Activated CD4-positive, alpha-beta T cell treated with anti-CD3 and anti-CD28 coated beads for 36 hours (primary cell): ENCODE measurements at regions of chrX and their contacts with region 1.

Region 1: GRCh38 chrX:1453951-1454785 is 1.5 kb upstream of the ASMTL start:
- DNase-seq: peak; percentile 96
- ATAC-seq: peak; percentile 57
- H3K4me3 Mint-ChIP-seq: peak overlapping the region; percentile 53
- H3K27ac Mint-ChIP-seq: peak overlapping the region; percentile 47
- H3K4me1 Mint-ChIP-seq: peaks cover 8% of the 10 kb centered on the region
- H3K27me3 Mint-ChIP-seq: no peaks in the 10 kb centered on the region

Region 2: DNA sequence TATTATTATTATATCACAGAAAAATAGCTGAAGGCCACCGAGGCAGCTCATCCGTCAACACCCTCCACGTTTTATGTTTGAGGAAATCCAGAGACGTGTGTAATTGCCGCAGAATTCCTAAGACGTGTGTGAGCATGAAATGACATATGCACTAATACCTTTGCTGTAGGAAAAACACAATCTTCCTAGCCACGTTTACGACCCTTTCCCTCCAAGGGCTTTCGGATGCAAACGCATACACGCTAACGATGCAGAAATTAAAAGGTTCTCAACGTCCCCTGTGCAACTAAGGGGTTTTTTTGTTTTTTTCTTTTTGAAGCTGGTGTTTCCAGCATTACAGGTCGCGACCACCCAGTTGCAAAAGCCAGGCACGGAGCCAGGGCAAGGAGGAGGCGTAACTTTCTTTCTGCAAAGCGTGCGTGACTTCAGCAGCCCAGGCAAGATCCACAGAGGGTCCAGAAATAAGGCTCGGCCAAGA is 275.5 kb before region 1 on chrX:
- CTCF ChIA-PET with region 1: no interaction called
- POLR2A ChIA-PET with region 1: no interaction called
- intact Hi-C with region 1: no loop called
- DNase-seq: peak; percentile 31
- ATAC-seq: peak; percentile 18
- H3K4me3 Mint-ChIP-seq: no peak overlapping the region
- H3K27ac Mint-ChIP-seq: no peak overlapping the region
- H3K4me1 Mint-ChIP-seq: no peaks in the 10 kb centered on the region
- H3K27me3 Mint-ChIP-seq: no peaks in the 10 kb centered on the region

Region 3: GRCh38 chrX:1246816-1247215 is 207.4 kb before region 1 on chrX:
- CTCF ChIA-PET with region 1: no interaction called
- POLR2A ChIA-PET with region 1: no interaction called
- intact Hi-C with region 1: loop called (anchors 2 kb)
- DNase-seq: peak; percentile 91
- ATAC-seq: peak; percentile 33
- H3K4me3 Mint-ChIP-seq: no peak overlapping the region
- H3K27ac Mint-ChIP-seq: no peak overlapping the region
- H3K4me1 Mint-ChIP-seq: peaks cover 36% of the 10 kb centered on the region
- H3K27me3 Mint-ChIP-seq: no peaks in the 10 kb centered on the region

Region 4: GRCh38 chrX:1491851-1492349 is 37.7 kb after region 1 on chrX:
- CTCF ChIA-PET with region 1: no interaction called
- POLR2A ChIA-PET with region 1: no interaction called
- intact Hi-C with region 1: loop called in 1 of 2 experiments (anchors 1 kb)
- DNase-seq: peak; percentile 80
- ATAC-seq: peak; percentile 94
- H3K4me3 Mint-ChIP-seq: no peak overlapping the region
- H3K27ac Mint-ChIP-seq: no peak overlapping the region
- H3K4me1 Mint-ChIP-seq: peaks cover 21% of the 10 kb centered on the region
- H3K27me3 Mint-ChIP-seq: no peaks in the 10 kb centered on the region

Region 5: DNA sequence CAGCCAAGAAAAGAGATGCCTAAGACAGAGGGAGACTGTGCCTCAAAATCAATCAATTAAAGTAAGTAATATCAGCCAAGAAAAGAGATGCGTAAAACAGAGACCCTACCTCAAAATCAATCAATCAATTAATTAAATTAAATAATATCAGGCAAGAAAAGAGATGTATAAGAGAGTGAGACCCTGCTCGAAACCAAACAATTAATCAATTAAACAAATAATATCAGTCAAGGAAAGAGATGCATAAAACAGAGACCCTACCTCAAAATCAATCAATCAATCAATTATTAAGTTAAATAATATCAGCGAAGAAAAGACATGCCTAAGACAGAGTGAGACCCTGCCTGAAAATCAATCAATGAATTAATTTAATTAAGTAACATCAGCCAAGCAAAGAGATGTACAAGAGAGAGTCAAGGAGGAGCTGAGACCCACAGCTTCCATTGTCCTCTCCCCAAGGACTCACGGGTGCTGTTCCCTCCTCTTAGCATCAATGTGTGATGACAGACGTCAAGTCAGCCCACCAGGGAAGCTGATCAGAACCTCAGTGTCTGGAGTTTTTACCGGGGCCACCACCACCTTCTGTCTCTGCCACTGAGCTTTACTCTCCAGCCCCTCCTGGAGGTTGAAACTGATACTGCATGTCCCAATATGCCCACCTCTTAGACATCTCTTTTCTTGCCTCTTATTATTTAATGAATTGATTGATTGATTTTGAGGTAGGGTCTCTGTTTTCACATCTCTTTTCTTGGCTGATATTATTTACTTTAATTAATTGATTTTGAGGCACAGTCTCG is 126.8 kb after region 1 on chrX:
- CTCF ChIA-PET with region 1: no interaction called
- POLR2A ChIA-PET with region 1: no interaction called
- intact Hi-C with region 1: loop called (anchors 1 kb)
- DNase-seq: peak; percentile 90
- ATAC-seq: peak; percentile 78
- H3K4me3 Mint-ChIP-seq: no peak overlapping the region
- H3K27ac Mint-ChIP-seq: no peak overlapping the region
- H3K4me1 Mint-ChIP-seq: peaks cover 19% of the 10 kb centered on the region
- H3K27me3 Mint-ChIP-seq: no peaks in the 10 kb centered on the region

Region 6: GRCh38 chrX:1657367-1658070 is 203.4 kb after region 1 on chrX:
- CTCF ChIA-PET with region 1: no interaction called
- POLR2A ChIA-PET with region 1: no interaction called
- intact Hi-C with region 1: loop called (anchors 1 kb)
- DNase-seq: peak; percentile 80
- ATAC-seq: peak; percentile 67
- H3K4me3 Mint-ChIP-seq: peak overlapping the region; percentile 93
- H3K27ac Mint-ChIP-seq: peak overlapping the region; percentile 98
- H3K4me1 Mint-ChIP-seq: peaks cover 23% of the 10 kb centered on the region
- H3K27me3 Mint-ChIP-seq: no peaks in the 10 kb centered on the region

Region 7: GRCh38 chrX:2690856-2691542 is 1236.8 kb after region 1 on chrX and contains the start of gene CD99:
- CTCF ChIA-PET with region 1: no interaction called
- POLR2A ChIA-PET with region 1: no interaction called
- intact Hi-C with region 1: loop called in 1 of 2 experiments (anchors 1 kb)
- DNase-seq: peak; percentile 91
- ATAC-seq: peak; percentile 79
- H3K4me3 Mint-ChIP-seq: peak within 1 kb of the TSS; percentile 95
- H3K27ac Mint-ChIP-seq: peak within 1 kb of the TSS; percentile 100
- H3K4me1 Mint-ChIP-seq: peaks cover 34% of the 10 kb centered on the region
- H3K27me3 Mint-ChIP-seq: no peaks in the 10 kb centered on the region
- total RNA-seq, gene CD99: 169 to 216 TPM